ENCODE measurements at regions of chr6 and their contacts with region 1.

Region 1: GRCh38 chr6:158718461-158719046 is 68.7 kb downstream of the SYTL3 start:
- DNase-seq: peak; percentile 76
- ATAC-seq: peak; percentile 92
- H3K4me3 Mint-ChIP-seq: no peak overlapping the region
- H3K27ac Mint-ChIP-seq: no peak overlapping the region
- H3K4me1 Mint-ChIP-seq: peaks cover 11% of the 10 kb centered on the region
- H3K27me3 Mint-ChIP-seq: no peaks in the 10 kb centered on the region
- CTCF ChIP-seq: peak; percentile 93

Region 2: GRCh38 chr6:158704181-158704822 is 14.3 kb before region 1 on chr6:
- CTCF ChIA-PET with region 1: interaction called, 22 read pairs
- POLR2A ChIA-PET with region 1: no interaction called
- DNase-seq: peak; percentile 86
- ATAC-seq: peak; percentile 94
- H3K4me3 Mint-ChIP-seq: peak overlapping the region; percentile 57
- H3K27ac Mint-ChIP-seq: no peak overlapping the region
- H3K4me1 Mint-ChIP-seq: peaks cover 14% of the 10 kb centered on the region
- H3K27me3 Mint-ChIP-seq: peaks cover 2% of the 10 kb centered on the region; the same call in 1 of the 2 replicates
- CTCF ChIP-seq: peak; percentile 93

Region 3: GRCh38 chr6:158737710-158738615 is 19.4 kb after region 1 on chr6:
- CTCF ChIA-PET with region 1: interaction called, 23 read pairs
- POLR2A ChIA-PET with region 1: no interaction called
- DNase-seq: no peak
- ATAC-seq: no peak
- H3K4me3 Mint-ChIP-seq: no peak overlapping the region
- H3K27ac Mint-ChIP-seq: no peak overlapping the region
- H3K4me1 Mint-ChIP-seq: no peaks in the 10 kb centered on the region
- H3K27me3 Mint-ChIP-seq: peaks cover 4% of the 10 kb centered on the region; the same call in 1 of the 2 replicates
- CTCF ChIP-seq: no peak

Region 4: DNA sequence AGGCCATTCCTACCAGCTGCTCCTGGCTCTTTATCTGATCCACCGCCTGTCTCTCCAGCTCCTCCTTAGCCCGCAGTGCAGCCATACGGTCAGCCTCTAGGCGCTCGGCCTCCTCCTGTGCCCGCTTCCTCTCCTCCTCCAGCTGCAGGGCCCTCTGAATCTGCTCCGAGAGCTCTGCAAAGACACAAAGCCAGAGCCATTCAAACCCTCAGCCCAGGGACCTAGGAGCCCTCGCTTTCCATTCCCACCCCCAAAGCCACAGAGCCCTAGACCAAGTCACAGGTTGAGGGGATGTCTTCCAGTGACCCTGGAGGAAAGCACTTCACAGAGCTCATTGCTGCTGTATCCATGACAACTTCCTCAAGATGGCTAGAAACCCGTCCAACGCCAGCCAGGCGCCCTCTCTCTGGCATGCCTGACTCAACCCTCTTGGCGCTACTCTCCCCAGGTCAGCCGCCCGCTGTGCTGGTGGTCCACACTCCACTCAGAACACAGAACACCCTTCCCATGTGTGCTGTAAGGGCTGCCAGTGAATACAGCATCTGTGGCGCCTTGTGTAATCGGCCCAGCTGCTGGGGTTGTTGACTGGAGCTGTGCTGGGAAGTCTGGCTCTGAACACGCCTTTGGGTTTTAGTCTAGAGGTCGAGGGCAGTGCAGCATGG is 51.3 kb after region 1 on chr6:
- CTCF ChIA-PET with region 1: interaction called, 14 read pairs
- POLR2A ChIA-PET with region 1: no interaction called
- DNase-seq: no peak
- ATAC-seq: no peak; the same call in 1 of the 2 replicates
- H3K4me3 Mint-ChIP-seq: no peak overlapping the region
- H3K27ac Mint-ChIP-seq: peak overlapping the region; percentile 69; the same call in 1 of the 2 replicates
- H3K4me1 Mint-ChIP-seq: peaks cover 15% of the 10 kb centered on the region
- H3K27me3 Mint-ChIP-seq: no peaks in the 10 kb centered on the region
- CTCF ChIP-seq: no peak

Region 5: DNA sequence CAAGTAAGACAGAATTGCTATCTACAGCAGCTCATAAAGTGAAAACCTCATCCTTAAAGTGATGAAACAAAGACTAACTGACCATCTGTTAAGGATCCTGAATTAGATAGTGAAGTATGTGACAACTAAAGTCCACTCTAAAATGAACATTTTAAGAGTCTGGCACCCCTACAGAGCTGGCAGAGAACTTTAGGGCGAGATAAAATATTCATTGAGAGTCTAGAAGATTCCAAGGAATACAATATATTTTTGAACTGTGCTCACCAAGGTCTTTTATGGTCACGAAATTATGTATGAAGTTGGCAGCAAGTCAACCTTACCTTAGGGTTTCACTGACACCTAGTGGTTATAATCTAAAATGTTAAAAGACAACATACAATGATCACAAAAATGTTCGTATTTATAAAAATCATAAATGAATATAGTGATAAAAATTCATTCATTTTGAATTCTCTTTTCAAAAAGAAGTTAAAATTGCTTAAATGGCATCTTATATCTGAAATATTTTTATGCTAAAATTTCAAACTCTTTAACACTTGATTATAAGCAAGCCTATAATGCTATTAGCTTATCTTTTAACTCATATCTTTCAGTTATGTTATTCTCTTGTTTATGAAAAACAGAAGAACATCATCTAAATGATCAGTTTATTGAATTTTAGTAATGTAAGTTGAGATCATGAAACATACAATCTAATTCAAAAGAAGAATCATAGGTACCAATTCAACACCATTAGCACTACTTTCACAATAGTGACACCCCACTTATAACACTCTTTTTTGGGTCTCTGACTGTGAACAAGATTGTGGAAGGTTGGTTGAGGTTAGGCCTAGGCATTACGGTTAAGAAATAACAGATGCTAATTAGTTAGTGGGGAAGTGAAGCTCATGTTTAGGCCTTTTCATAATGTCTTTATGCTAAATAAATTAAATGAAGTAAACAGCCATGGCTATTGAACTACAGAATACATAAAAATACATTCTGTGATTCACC is 254.0 kb after region 1 on chr6:
- CTCF ChIA-PET with region 1: interaction called, 23 read pairs
- POLR2A ChIA-PET with region 1: interaction called, 4 read pairs
- DNase-seq: no peak
- ATAC-seq: peak; percentile 28; the same call in 1 of the 2 replicates
- H3K4me3 Mint-ChIP-seq: no peak overlapping the region
- H3K27ac Mint-ChIP-seq: no peak overlapping the region
- H3K4me1 Mint-ChIP-seq: peaks cover 13% of the 10 kb centered on the region
- H3K27me3 Mint-ChIP-seq: no peaks in the 10 kb centered on the region; the same call in none of the 2 replicates
- CTCF ChIP-seq: peak; percentile 14; the same call in 1 of the 2 replicates